IMR-90 (cell line): ENCODE measurements at regions of chr6 and their contacts with region 1.

Region 1: GRCh38 chr6:112480553-112480952 is 133.4 kb downstream of the RFPL4B start:
- DNase-seq: peak; percentile 82
- ATAC-seq: peak; percentile 49
- H3K4me3 ChIP-seq: no peak overlapping the region
- H3K27ac ChIP-seq: no peak overlapping the region
- H3K4me1 ChIP-seq: no peaks in the 10 kb centered on the region; the same call in 1 of the 2 replicates
- H3K27me3 ChIP-seq: no peaks in the 10 kb centered on the region
- CTCF ChIP-seq: no peak
- POLR2A ChIP-seq: no peak
- RAD21 ChIP-seq: no peak

Region 2: DNA sequence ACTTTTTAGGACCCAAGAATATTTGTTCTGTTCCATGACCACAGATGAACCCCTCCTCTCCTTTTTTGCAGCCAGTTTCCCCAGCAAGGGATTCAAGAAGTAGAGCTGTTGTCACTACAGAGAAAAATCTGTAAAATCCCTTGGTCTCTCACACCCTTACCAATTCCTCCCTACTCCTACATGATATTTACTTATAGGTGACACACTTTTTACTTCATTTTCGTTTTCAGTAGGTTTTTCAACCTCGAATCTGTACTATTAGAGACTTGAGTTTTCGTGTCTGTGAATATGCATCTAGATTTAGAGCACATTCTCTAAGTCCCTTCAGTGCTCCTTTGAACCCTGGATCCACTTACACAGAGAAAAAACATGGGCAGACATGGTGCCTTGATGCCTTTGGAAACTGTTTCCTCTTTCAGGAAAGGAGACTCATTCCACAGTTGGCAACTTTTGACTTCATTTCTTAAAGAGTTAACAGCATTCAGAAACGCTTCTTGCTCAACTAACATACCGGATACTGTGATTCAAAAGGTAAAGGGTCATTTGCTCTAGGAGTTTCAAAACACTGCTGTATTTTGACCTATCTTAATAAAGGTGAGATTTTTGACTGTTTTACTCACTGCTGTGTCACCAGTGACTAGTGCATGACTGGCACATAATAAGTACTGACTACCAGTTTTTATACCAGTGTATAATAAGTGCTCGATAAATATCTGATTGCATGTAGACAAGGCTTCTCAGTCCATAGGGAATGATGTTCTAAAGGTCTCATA is 276.8 kb before region 1 on chr6:
- CTCF ChIA-PET with region 1: no interaction called
- POLR2A ChIA-PET with region 1: no interaction called
- dilution Hi-C with region 1: no loop called
- in situ Hi-C with region 1: no loop called
- intact Hi-C with region 1: no loop called
- DNase-seq: peak; percentile 95
- ATAC-seq: peak; percentile 73
- H3K4me3 ChIP-seq: peak overlapping the region; percentile 17; the same call in 1 of the 2 replicates
- H3K27ac ChIP-seq: peak overlapping the region; percentile 83
- H3K4me1 ChIP-seq: peaks cover 18% of the 10 kb centered on the region
- H3K27me3 ChIP-seq: no peaks in the 10 kb centered on the region
- CTCF ChIP-seq: no peak
- POLR2A ChIP-seq: peak; percentile 29; the same call in 1 of the 2 replicates
- RAD21 ChIP-seq: no peak

Region 3: GRCh38 chr6:113970805-113971676 is 1490.5 kb after region 1 on chr6 and contains the start of gene HDAC2:
- CTCF ChIA-PET with region 1: no interaction called
- POLR2A ChIA-PET with region 1: interaction called, 10 read pairs
- dilution Hi-C with region 1: no loop called
- in situ Hi-C with region 1: no loop called
- intact Hi-C with region 1: no loop called
- DNase-seq: peak; percentile 77
- ATAC-seq: peak; percentile 87
- H3K4me3 ChIP-seq: peak within 1 kb of the TSS; percentile 97
- H3K27ac ChIP-seq: peak within 1 kb of the TSS; percentile 100
- H3K4me1 ChIP-seq: peaks cover 5% of the 10 kb centered on the region
- H3K27me3 ChIP-seq: no peaks in the 10 kb centered on the region
- CTCF ChIP-seq: no peak
- POLR2A ChIP-seq: peak; percentile 53; the same call in 1 of the 2 replicates
- RAD21 ChIP-seq: no peak
- total RNA-seq, gene HDAC2: 72.6 and 116 TPM in 2 replicates